Heart right ventricle (tissue), 16 donors: ENCODE measurements at regions of chr17 and their contacts with region 1.

Region 1: GRCh38 chr17:29180034-29180787 is at the start of gene MYO18A:
- DNase-seq: peak; percentile 78 to 84
- ATAC-seq: peak; percentile 74 to 90 (median 82)
- H3K4me3 ChIP-seq: peak within 1 kb of the TSS; percentile 48 to 77 (median 68)
- H3K27ac ChIP-seq: peak within 1 kb of the TSS; percentile 60 to 97 (median 90)
- H3K4me1 ChIP-seq: peaks cover 27 to 58% (median 49%) of the 10 kb centered on the region in 9 donors
- H3K27me3 ChIP-seq: peaks cover 0 to 5% (median 0%) of the 10 kb centered on the region in 7 donors
- CTCF ChIP-seq: peak; percentile 75 to 94 (median 89)
- total RNA-seq, gene MYO18A: 217 to 408 (median 327) TPM

Region 2: DNA sequence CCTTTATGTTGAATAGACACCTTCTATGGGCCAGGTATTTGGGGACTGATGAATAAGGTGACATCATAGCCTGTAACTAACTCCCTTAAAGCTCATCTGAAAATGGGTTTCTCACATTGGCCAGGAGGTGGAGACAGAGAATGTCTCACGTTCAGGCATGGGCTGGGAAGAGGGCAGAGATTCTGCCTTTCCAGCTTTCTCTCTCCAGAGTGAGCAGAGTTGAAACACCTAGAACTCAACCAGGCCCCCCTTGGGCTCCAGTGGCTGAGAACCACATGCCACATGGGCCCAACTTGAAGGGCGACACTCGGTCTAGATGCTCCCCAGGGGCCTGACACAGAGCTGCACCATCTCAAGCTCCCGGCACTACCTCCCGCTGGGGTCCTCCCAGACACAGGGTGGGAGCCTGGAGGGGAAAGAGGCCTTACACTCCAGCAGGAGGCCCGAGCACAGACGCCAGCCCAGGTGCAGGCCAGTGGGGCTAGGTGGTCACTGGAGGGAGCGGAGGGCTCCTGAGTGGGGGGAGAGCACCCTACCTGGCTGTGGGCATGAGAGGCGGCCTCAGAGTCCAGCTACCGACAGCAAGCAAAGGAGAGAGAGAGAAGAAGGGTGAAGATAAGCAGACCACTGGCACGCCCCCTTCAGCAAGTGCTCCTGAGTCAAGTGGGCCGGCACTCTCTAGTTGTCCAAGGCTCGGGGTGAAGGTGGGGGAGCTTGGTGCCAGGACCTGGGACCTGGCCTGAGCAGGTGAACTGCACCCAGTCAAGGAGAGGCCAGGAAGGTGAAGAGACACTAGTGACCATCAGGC is 55.9 kb before region 1 on chr17:
- intact Hi-C with region 1: loop called in 1 of 10 experiments (anchors 5 kb)
- DNase-seq: peak in 1 of 2 donors; percentile 71
- ATAC-seq: peak; percentile 47 to 85 (median 78)
- H3K4me3 ChIP-seq: no peak overlapping the region
- H3K27ac ChIP-seq: peak overlapping the region in 7 of 10 donors; percentile 0 to 58 (median 47)
- H3K4me1 ChIP-seq: peaks cover 25 to 51% (median 38%) of the 10 kb centered on the region in 9 donors
- H3K27me3 ChIP-seq: no peaks in the 10 kb centered on the region
- CTCF ChIP-seq: peak; percentile 42 to 81 (median 70)

Region 3: DNA sequence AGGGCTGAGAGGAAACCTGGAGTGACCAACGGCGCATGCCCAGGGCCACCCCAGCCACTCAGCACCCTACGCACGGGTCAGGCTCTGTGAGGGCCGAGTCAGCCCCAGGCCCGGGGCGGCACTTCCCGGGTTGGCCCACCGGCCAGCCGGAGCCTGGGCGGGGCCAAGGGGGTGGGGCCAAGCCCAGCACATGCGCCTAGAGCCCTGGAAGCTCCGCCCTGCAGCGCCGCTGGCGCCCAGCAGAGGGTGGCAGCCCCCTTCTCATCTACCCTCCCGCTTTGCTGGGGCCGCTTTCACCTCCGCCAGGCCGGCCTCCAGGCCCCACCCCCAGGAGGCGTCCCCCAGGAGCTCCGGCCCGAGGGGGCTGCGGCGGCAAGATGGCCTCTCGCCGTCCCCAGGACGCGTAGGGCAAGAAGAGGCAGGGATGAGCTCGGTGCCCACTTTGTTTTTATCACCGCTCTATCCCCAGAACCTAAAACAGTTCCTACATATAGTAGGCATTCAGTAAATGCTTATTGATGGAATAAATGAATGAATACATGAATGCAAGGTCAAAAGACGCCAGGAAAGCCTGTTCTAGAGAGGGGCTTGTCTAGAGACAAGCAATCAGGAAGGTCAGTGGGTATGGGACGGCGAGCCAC is 31.3 kb before region 1 on chr17:
- intact Hi-C with region 1: loop called in 7 of 10 experiments (anchors 1 to 5 kb)
- DNase-seq: peak; percentile 93 to 96
- ATAC-seq: peak; percentile 94 to 97 (median 96)
- H3K4me3 ChIP-seq: peak overlapping the region in 9 of 10 donors; percentile 21 to 65 (median 59)
- H3K27ac ChIP-seq: peak overlapping the region; percentile 14 to 89 (median 78)
- H3K4me1 ChIP-seq: peaks cover 7 to 73% (median 47%) of the 10 kb centered on the region in 9 donors
- H3K27me3 ChIP-seq: no peaks in the 10 kb centered on the region
- CTCF ChIP-seq: peak; percentile 94 to 100 (median 99)

Region 4: GRCh38 chr17:29219378-29220047 is 39.3 kb after region 1 on chr17:
- intact Hi-C with region 1: loop called in 3 of 10 experiments (anchors 2 to 5 kb)
- DNase-seq: peak; percentile 56 to 83
- ATAC-seq: peak; percentile 87 to 96 (median 91)
- H3K4me3 ChIP-seq: no peak overlapping the region
- H3K27ac ChIP-seq: no peak overlapping the region
- H3K4me1 ChIP-seq: peaks cover 0 to 11% (median 8%) of the 10 kb centered on the region in 9 donors
- H3K27me3 ChIP-seq: no peaks in the 10 kb centered on the region
- CTCF ChIP-seq: peak; percentile 88 to 97 (median 92)

Region 5: GRCh38 chr17:29283271-29283895 is 103.2 kb after region 1 on chr17:
- intact Hi-C with region 1: loop called in 1 of 10 experiments (anchors 10 kb)
- DNase-seq: no peak
- ATAC-seq: no peak
- H3K4me3 ChIP-seq: no peak overlapping the region
- H3K27ac ChIP-seq: no peak overlapping the region
- H3K4me1 ChIP-seq: peaks cover 9 to 83% (median 68%) of the 10 kb centered on the region in 9 donors
- H3K27me3 ChIP-seq: no peaks in the 10 kb centered on the region
- CTCF ChIP-seq: peak in 4 of 9 donors; percentile 6 to 27 (median 10)

Region 6: GRCh38 chr17:29293890-29294579 is 113.8 kb after region 1 on chr17 and contains the start of gene NUFIP2:
- intact Hi-C with region 1: loop called in 2 of 10 experiments (anchors 2 to 10 kb)
- DNase-seq: peak; percentile 99
- ATAC-seq: peak; percentile 94 to 98 (median 97)
- H3K4me3 ChIP-seq: peak within 1 kb of the TSS; percentile 73 to 99 (median 95)
- H3K27ac ChIP-seq: peak within 1 kb of the TSS; percentile 90 to 100 (median 99)
- H3K4me1 ChIP-seq: peaks cover 15 to 42% (median 35%) of the 10 kb centered on the region in 9 donors
- H3K27me3 ChIP-seq: no peaks in the 10 kb centered on the region
- CTCF ChIP-seq: peak in 3 of 9 donors; percentile 27 to 45 (median 28)
- total RNA-seq, gene NUFIP2: 32.1 to 58.3 (median 39.6) TPM